ENCODE measurements at regions of chr11 and their contacts with region 1.

Region 1: GRCh38 chr11:2196970-2197770 is 25.6 kb upstream of the TH start:
- DNase-seq: no peak
- H3K4me3 ChIP-seq: no peak overlapping the region
- H3K27me3 ChIP-seq: no peaks in the 10 kb centered on the region
- CTCF ChIP-seq: peak; percentile 94

Region 2: GRCh38 chr11:2109541-2110019 is 87.6 kb before region 1 on chr11:
- CTCF ChIA-PET with region 1: no interaction called
- POLR2A ChIA-PET with region 1: no interaction called
- DNase-seq: no peak
- H3K4me3 ChIP-seq: no peak overlapping the region
- H3K27me3 ChIP-seq: no peaks in the 10 kb centered on the region; the same call in 1 of the 2 replicates
- CTCF ChIP-seq: no peak

Region 3: GRCh38 chr11:2128130-2128510 is 69.0 kb before region 1 on chr11:
- CTCF ChIA-PET with region 1: no interaction called
- POLR2A ChIA-PET with region 1: no interaction called
- DNase-seq: no peak
- H3K4me3 ChIP-seq: no peak overlapping the region
- H3K27me3 ChIP-seq: no peaks in the 10 kb centered on the region
- CTCF ChIP-seq: no peak

Region 4: GRCh38 chr11:2298795-2299761 is 101.9 kb after region 1 on chr11:
- CTCF ChIA-PET with region 1: interaction called, 36 read pairs
- POLR2A ChIA-PET with region 1: no interaction called
- DNase-seq: no peak
- H3K4me3 ChIP-seq: no peak overlapping the region
- H3K27me3 ChIP-seq: peaks cover 2% of the 10 kb centered on the region; the same call in 1 of the 2 replicates
- CTCF ChIP-seq: no peak

Region 5: GRCh38 chr11:2382936-2383851 is 186.0 kb after region 1 on chr11:
- CTCF ChIA-PET with region 1: no interaction called
- POLR2A ChIA-PET with region 1: no interaction called
- DNase-seq: no peak
- H3K4me3 ChIP-seq: no peak overlapping the region
- H3K27me3 ChIP-seq: no peaks in the 10 kb centered on the region
- CTCF ChIP-seq: peak; percentile 8; the same call in 1 of the 2 replicates